GM10248 (cell line): ENCODE measurements at regions of chrX and their contacts with region 1.

Region 1: DNA sequence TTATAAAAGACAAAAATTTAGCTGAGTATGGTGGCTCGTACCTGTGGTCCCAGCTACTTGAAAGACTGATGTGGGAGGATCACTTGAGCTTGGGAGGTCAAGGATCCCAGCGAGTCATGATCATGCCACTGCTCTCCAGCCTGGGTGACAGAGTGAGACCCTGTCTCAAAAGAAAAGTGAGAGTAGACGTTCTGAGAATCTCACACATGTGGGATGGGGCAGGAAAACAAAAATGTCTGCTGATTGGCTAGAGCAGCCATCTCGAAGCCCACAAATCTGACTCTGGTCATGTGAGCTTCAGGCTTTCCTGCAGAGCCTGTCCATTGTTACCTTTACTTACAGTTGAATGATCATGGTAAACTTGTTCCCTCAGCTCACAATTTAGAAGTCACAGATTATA is 23.1 kb upstream of the SLC9A7 start:
- DNase-seq: no peak
- CTCF ChIP-seq: no peak

Region 2: GRCh38 chrX:46770817-46771163 is 11.2 kb before region 1 on chrX:
- CTCF ChIA-PET with region 1: interaction called, 15 read pairs
- POLR2A ChIA-PET with region 1: no interaction called
- DNase-seq: no peak
- CTCF ChIP-seq: no peak

Region 3: DNA sequence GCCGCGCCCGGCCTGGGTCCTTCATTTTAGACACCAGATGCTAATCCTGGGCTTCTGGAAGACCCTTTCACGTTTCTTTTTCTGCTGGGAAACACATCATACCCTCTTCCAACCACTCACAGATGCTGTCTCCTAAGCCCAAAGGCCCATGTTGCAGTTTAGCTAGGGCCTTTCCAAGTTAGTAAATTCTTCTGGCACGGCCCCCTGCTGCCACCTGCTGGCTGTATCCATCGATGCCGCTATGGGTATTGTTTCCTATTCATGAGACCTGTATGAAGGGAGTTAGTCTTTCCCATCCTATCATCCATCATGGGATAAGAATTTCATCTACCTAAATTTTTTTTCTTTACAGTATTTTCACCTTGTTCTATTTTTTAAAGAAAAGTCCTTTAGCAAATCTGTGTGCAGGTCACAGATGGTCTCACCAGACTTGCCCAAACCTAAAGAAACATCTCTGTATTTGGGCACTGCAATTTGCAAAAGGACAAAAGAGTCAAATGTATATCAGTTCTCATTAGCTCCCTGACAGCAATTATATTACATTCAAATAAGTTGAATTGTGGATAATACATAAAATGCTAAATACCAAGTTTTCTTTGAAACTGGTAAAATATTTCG is 14.6 kb after region 1 on chrX:
- CTCF ChIA-PET with region 1: interaction called, 23 read pairs
- POLR2A ChIA-PET with region 1: no interaction called
- DNase-seq: peak; percentile 65
- CTCF ChIP-seq: peak; percentile 54

Region 4: DNA sequence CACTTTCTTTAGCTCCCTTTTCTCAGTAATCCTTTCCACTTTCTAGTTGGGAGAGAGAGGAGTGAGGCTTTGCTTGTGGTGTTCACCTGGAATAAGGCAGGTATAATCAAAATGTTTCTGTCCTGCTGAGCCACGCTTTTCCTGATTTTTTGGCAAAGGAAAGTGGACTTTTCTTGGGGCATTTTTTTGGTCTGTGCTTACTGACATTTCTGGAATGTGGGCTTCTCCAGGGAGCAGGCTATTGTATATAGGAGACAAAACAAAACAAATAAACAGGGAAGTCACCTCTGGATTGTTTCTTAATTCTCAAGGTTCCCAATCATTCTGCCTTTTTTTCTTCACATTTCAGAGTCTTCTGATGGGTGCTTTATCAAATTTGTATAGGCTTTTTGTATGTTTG is 29.1 kb after region 1 on chrX:
- CTCF ChIA-PET with region 1: no interaction called
- POLR2A ChIA-PET with region 1: no interaction called
- DNase-seq: no peak
- CTCF ChIP-seq: no peak

Region 5: GRCh38 chrX:46873746-46874145 is 91.7 kb after region 1 on chrX:
- CTCF ChIA-PET with region 1: no interaction called
- POLR2A ChIA-PET with region 1: no interaction called
- DNase-seq: no peak
- CTCF ChIP-seq: no peak

Region 6: GRCh38 chrX:47068720-47069119 is 286.7 kb after region 1 on chrX:
- CTCF ChIA-PET with region 1: no interaction called
- POLR2A ChIA-PET with region 1: no interaction called
- DNase-seq: no peak
- CTCF ChIP-seq: no peak